Activated CD4-positive, alpha-beta memory T cell treated with anti-CD3 and anti-CD28 coated beads for 36 hours (primary cell): ENCODE measurements at regions of chr6 and their contacts with region 1.

Region 1: DNA sequence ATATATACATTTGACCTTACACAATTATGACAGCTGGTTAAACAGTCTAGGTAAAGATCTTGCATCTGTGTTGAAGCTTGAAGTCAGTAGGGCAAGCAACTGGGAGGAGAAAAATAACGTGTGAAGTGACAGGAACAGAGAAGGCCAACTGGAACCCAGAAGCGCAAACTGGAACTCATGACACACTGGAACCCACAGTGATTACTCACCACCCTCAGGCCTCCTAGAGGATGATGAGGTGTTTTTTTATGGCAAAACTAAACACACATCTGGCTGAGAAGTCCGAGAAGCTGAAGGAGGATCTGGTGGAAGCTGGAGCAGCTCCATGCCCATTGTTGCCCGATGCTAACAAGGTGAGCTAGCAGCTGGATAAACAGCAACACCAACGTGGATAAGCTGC is 108.1 kb downstream of the TMEM200A start:
- DNase-seq: peak; percentile 30
- H3K4me3 Mint-ChIP-seq: no peak overlapping the region
- H3K27ac Mint-ChIP-seq: no peak overlapping the region
- H3K4me1 Mint-ChIP-seq: peaks cover 5% of the 10 kb centered on the region
- H3K27me3 Mint-ChIP-seq: no peaks in the 10 kb centered on the region

Region 2: GRCh38 chr6:130560231-130560630 is 86.3 kb after region 1 on chr6:
- CTCF ChIA-PET with region 1: no interaction called
- POLR2A ChIA-PET with region 1: no interaction called
- intact Hi-C with region 1: loop called (anchors 5 kb)
- DNase-seq: no peak
- H3K4me3 Mint-ChIP-seq: no peak overlapping the region
- H3K27ac Mint-ChIP-seq: no peak overlapping the region
- H3K4me1 Mint-ChIP-seq: peaks cover 14% of the 10 kb centered on the region
- H3K27me3 Mint-ChIP-seq: no peaks in the 10 kb centered on the region